Activated naive CD4-positive, alpha-beta T cell treated with anti-CD3 and anti-CD28 coated beads for 36 hours (primary cell): ENCODE measurements at regions of chr3 and their contacts with region 1.

Region 1: DNA sequence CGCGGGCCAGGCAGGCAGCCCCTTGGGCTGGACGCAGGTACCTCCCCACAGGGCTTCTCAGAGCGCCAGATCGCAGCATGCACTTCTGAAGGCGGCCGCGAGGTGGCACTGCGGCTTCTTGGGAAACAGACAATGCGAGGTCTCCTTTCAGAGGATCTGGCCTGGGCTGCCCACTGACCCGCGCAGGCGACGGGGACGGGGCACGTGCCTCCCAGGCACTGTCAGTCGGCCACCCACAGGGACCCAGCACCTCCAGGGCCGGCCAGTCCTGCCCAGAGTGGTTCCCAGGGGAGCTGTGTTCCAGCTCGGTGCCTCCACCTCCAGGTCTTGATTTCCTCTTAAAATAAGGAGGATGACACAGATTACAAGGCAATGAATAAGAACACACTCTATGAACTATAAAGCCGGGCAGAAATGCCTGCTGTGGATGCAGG is 24.4 kb upstream of the TXNRD3 start:
- DNase-seq: peak; percentile 86
- H3K4me3 Mint-ChIP-seq: peak overlapping the region; percentile 5
- H3K27ac Mint-ChIP-seq: no peak overlapping the region
- H3K4me1 Mint-ChIP-seq: peaks cover 3% of the 10 kb centered on the region
- H3K27me3 Mint-ChIP-seq: peaks cover 5% of the 10 kb centered on the region

Region 2: DNA sequence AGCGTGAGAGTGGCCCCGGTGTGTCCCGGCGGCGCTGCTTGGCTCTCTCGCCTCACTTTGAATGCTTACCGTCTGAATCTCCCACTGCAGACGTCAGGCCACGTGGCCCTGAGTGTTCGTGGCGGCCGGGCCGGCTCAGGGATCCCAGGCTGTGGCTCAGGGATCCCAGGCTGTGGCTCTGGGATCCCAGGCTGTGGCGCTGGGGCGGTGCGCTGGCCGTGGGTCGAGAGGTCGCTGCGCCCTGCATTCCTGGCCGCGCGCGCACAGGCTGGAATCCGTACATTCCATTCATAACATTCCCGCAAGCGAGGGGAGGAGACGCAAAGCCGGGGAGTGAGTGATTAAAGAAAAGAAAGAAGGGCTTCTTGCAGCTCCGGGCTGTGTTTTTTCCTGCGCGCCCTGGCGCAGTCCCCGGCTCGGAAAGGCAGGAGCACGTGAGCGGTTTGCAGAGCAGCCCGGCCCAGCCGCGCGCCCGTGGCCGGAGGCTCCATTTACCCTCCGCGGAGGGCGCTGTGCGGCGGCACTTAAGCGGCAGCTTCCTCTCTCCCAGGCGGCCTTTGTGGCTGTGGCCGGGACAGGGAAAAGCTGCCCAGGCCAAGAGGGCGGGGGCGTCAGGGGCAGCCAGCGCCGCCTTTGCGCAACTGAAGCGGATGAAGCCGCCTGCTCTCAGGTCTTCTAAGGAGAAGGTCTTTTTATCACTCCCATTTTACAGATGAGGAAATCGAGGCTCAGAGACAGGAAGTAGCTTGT is 411.9 kb before region 1 on chr3:
- CTCF ChIA-PET with region 1: no interaction called
- intact Hi-C with region 1: no loop called
- DNase-seq: no peak
- H3K4me3 Mint-ChIP-seq: no peak overlapping the region
- H3K27ac Mint-ChIP-seq: no peak overlapping the region
- H3K4me1 Mint-ChIP-seq: no peaks in the 10 kb centered on the region
- H3K27me3 Mint-ChIP-seq: peaks cover 23% of the 10 kb centered on the region

Region 3: DNA sequence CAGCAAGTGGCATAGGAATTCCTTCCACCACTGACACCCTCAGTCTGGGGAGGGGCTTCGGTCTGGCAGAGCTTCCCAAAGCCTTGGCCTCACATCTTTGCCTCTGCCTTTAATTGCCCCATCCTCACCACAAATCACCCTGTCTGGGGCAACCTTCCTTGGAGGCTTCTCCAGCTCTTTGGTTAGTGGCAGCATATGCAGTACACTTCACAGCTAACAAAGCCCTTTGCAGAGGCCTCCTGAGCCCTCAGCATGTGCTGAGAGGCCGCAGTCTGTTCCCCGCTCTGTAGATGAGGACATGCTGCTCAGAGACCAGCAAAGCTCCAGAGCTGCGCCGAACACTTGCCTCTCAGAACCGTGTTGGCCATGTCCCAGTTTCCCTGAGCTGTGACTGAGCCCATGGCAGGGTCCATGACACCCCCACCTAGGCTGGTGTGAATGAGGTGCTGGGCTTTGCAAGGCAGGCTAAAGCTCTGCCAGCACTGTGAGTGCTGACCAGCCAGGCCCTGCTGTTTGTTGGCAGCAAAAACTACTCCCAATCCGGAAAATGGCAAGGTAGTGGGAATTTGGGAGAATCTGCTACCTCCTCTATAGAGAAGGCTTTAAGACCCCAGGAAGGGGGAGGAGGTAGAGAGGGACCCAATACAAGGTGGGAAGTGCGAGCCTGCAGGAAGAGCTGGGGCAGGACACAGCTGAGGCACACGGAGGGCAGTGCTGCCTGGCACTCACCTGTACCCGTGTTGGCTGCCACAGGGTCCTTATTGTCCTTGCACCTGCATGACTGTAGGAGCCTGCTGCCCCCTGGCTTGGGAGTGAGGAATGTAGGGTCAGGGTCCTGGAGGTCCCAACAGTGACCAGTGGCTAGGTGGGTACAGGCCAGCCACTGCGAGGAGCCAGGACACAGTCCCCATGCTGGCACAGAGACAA is 313.7 kb before region 1 on chr3:
- CTCF ChIA-PET with region 1: no interaction called
- intact Hi-C with region 1: no loop called
- DNase-seq: no peak
- H3K4me3 Mint-ChIP-seq: no peak overlapping the region
- H3K27ac Mint-ChIP-seq: no peak overlapping the region
- H3K4me1 Mint-ChIP-seq: no peaks in the 10 kb centered on the region
- H3K27me3 Mint-ChIP-seq: peaks cover 5% of the 10 kb centered on the region

Region 4: DNA sequence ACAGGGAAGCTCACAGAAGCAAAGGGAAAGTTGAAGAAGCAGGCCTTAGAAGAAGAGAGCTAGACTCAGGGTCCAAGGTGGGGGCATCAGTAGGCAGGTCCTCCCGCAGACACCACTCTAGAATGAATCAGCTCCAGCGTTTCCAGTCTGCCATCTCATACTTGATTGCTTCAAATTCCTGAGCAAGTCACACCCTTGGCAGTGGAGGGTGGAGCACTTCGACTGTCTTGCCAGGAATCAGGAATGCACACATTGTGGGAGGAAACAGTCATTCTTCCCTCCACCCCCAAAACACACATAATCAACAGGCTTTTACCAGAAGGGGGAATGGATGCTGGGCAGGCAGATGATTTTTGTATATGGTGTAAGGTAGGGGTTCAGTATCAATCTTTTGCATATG is 103.2 kb after region 1 on chr3:
- CTCF ChIA-PET with region 1: no interaction called
- intact Hi-C with region 1: no loop called
- DNase-seq: no peak
- H3K4me3 Mint-ChIP-seq: no peak overlapping the region
- H3K27ac Mint-ChIP-seq: no peak overlapping the region
- H3K4me1 Mint-ChIP-seq: no peaks in the 10 kb centered on the region
- H3K27me3 Mint-ChIP-seq: no peaks in the 10 kb centered on the region

Region 5: DNA sequence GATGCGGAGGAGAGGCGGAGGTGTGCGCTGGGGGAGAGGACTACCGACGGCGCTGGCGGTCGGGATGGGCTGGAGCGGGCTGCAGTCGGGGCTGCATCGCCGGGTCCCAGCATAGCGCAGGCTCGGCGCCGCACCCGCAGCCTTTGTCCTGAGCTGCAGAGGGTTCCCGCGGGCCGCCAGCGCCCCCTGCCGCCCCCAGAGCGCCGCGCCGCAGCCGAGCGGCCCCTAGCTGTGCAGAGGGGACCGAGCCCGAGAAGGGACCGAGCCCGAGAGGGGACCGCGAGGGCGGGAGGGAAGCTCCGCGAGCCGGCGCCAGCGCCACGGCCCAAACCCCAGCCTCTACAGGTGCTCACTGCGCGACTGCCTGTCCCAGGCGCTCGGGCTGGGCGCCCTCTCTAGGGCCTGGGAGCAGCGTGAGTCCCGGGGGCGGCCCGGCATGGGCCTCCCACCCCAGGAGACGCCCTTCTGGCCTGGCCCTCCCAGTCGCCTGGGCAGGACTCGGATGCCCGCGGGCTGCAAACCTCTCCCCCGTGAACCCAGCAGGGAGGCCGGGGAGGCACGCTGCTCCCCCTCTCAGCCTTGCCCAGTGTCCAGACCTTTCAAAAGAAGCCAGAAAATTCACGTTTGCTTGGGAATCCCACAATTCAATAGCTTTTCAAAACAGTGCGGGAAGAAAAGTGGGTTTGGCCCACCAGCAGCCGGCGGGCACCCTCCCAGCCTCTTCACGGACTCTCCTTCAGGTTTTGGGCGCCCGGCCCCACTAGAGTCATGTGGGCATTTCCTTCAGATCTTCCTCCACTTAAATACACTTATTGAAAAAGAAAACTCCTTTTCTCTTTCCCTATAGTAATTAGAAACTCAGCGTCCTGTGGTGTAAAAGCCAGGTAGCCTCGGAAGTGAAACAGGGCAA is 776.5 kb after region 1 on chr3:
- CTCF ChIA-PET with region 1: interaction called, 4 read pairs
- intact Hi-C with region 1: loop called (anchors 1 kb)
- DNase-seq: peak; percentile 67
- H3K4me3 Mint-ChIP-seq: no peak overlapping the region
- H3K27ac Mint-ChIP-seq: no peak overlapping the region
- H3K4me1 Mint-ChIP-seq: peaks cover 16% of the 10 kb centered on the region
- H3K27me3 Mint-ChIP-seq: peaks cover 53% of the 10 kb centered on the region